Sigmoid colon (tissue), 7 donors: ENCODE measurements at regions of chr5 and their contacts with region 1.

Region 1: DNA sequence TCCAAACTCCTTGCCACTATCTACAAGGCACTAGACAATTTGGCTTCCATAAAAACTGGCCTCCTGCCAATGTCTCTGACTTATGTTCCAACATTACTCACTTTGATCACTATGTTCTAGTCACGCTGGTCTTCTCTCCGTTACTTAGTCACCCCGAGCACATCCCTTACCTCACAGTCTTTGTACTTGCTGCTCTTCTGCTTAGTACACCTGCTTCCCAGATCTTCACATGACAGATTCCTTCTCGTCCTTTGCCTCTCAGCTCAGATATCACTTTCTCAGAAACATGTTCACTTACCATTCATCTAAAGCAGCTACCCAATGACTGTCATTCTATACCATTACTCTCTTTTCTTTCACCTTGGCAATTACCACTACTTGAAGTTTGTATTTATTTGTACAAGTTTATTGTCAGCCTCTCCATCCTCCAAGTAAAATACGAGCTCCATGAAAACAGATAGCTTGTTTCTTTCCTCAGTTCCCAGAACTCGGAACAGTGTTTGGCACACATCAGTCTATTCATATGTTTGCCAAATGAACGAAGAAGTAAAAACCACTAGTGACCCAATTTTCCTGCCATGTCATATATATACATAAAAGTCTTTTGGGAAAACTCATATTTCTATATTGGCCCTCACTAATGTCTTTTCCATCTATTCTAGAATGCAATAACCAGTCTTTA is 5.9 kb upstream of the SLC22A5 start:
- DNase-seq: no peak
- H3K4me3 ChIP-seq: no peak overlapping the region
- H3K27ac ChIP-seq: peak overlapping the region; percentile 44 to 77 (median 64)
- H3K4me1 ChIP-seq: peaks cover 0 to 27% (median 13%) of the 10 kb centered on the region in 4 donors
- H3K27me3 ChIP-seq: no peaks in the 10 kb centered on the region
- CTCF ChIP-seq: no peak
- EP300 ChIP-seq: peak in 3 of 4 donors; percentile 3 to 98 (median 88)
- POLR2A ChIP-seq: no peak

Region 2: GRCh38 chr5:132272311-132273210 is 91.0 kb before region 1 on chr5:
- intact Hi-C with region 1: loop called (anchors 5 kb)
- DNase-seq: peak; percentile 79
- H3K4me3 ChIP-seq: no peak overlapping the region
- H3K27ac ChIP-seq: peak overlapping the region; percentile 32 to 99 (median 76)
- H3K4me1 ChIP-seq: peaks cover 0 to 49% (median 46%) of the 10 kb centered on the region in 4 donors
- H3K27me3 ChIP-seq: no peaks in the 10 kb centered on the region
- CTCF ChIP-seq: peak; percentile 49 to 84 (median 82)
- EP300 ChIP-seq: no peak
- POLR2A ChIP-seq: no peak